ENCODE measurements at regions of chr18 and their contacts with region 1.

Region 1: DNA sequence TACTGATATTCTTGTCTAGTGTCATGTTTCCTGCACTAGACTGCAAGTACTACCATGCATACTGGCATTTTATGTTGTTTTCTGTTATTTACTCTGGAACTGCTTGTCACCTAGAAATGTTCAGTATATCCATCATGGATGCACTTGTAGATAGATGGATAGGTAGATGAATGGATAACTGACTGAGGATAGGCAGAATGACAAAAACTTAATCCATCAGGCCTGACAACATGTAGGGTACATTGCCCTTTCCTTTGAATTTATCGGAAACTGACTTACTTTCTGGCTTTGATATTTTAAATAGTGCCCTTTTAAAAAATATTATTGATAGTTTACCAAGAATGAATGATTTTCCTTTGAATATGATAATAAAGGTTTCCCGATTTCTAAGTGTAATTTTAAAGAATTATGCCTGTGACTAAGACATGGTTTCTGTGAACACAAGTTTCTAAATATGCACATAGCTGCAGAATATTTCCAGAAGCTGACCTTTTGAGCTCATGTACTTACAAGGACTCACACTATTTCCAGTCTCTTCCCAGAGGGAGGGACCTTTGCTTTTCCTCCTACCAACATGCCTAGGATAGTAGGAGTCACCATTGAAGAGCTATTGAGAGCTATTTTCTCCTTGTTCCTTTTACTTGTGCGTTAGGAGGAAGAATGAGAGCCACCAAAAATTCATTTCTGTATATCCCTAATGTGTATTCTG is 81.3 kb downstream of the ANKRD12 start:
- DNase-seq: no peak
- H3K4me3 ChIP-seq: no peak overlapping the region
- H3K27ac ChIP-seq: no peak overlapping the region
- H3K27me3 ChIP-seq: no peaks in the 10 kb centered on the region
- CTCF ChIP-seq: no peak

Region 2: GRCh38 chr18:8794133-8794986 is 423.5 kb before region 1 on chr18:
- CTCF ChIA-PET with region 1: no interaction called
- POLR2A ChIA-PET with region 1: no interaction called
- DNase-seq: no peak
- H3K4me3 ChIP-seq: no peak overlapping the region
- H3K27ac ChIP-seq: peak overlapping the region; percentile 80
- H3K27me3 ChIP-seq: no peaks in the 10 kb centered on the region
- CTCF ChIP-seq: no peak

Region 3: DNA sequence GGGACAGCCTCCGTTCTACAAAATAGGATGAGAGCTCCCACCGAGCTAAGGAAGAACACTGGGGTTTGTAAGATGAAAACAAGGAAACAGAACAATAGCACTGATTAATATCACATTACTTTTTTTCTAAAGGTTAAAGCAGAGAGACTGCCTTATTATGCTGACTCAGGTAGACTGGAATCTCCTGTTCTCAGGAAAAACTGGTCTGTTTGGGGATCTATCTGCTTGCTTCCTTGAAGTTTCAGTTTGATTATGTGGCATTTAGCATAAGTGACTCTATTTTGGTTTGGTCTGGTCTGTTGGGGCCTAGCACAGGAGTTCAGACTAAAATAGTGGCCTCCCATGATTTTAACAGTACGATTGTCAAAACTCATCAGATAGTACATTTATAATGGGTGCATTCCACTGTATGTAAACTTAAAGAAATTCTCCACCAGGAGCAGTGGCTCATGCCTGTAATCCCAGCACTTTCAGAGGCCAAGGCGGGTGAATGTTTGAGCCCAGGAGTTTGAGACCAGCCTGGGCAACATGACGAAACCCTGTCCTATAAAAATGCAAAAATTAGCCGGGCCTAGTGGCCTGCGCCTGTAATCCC is 179.5 kb before region 1 on chr18:
- CTCF ChIA-PET with region 1: interaction called, 12 read pairs
- POLR2A ChIA-PET with region 1: no interaction called
- DNase-seq: no peak
- H3K4me3 ChIP-seq: no peak overlapping the region
- H3K27ac ChIP-seq: no peak overlapping the region
- H3K27me3 ChIP-seq: no peaks in the 10 kb centered on the region
- CTCF ChIP-seq: no peak

Region 4: GRCh38 chr18:9082711-9083510 is 135.0 kb before region 1 on chr18:
- CTCF ChIA-PET with region 1: no interaction called
- POLR2A ChIA-PET with region 1: no interaction called
- DNase-seq: no peak
- H3K4me3 ChIP-seq: no peak overlapping the region
- H3K27ac ChIP-seq: no peak overlapping the region
- H3K27me3 ChIP-seq: no peaks in the 10 kb centered on the region
- CTCF ChIP-seq: no peak

Region 5: DNA sequence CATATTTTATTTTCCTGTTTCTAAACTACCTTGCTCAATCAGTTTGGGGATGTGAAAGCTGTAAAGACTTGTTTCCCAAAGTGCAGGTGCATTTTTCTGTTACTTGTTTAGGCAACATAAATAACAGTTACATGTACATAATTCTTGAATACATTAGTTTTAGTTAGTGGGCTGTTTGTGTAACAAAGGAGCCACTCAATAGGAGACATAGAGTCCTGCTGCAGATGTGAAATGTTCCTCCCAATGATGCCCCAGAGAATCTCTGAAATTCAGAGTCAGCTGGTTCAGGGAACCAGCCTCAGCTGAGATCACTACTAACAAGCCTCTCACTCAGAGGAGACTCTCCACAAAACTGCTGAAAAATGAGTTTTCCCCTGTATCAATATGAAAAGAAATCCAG is 25.1 kb after region 1 on chr18:
- CTCF ChIA-PET with region 1: no interaction called
- POLR2A ChIA-PET with region 1: no interaction called
- DNase-seq: no peak
- H3K4me3 ChIP-seq: no peak overlapping the region
- H3K27ac ChIP-seq: no peak overlapping the region
- H3K27me3 ChIP-seq: no peaks in the 10 kb centered on the region
- CTCF ChIP-seq: no peak

Measured in AG04450 (cell line).